ENCODE measurements at regions of chr19 and their contacts with region 1.

Region 1: DNA sequence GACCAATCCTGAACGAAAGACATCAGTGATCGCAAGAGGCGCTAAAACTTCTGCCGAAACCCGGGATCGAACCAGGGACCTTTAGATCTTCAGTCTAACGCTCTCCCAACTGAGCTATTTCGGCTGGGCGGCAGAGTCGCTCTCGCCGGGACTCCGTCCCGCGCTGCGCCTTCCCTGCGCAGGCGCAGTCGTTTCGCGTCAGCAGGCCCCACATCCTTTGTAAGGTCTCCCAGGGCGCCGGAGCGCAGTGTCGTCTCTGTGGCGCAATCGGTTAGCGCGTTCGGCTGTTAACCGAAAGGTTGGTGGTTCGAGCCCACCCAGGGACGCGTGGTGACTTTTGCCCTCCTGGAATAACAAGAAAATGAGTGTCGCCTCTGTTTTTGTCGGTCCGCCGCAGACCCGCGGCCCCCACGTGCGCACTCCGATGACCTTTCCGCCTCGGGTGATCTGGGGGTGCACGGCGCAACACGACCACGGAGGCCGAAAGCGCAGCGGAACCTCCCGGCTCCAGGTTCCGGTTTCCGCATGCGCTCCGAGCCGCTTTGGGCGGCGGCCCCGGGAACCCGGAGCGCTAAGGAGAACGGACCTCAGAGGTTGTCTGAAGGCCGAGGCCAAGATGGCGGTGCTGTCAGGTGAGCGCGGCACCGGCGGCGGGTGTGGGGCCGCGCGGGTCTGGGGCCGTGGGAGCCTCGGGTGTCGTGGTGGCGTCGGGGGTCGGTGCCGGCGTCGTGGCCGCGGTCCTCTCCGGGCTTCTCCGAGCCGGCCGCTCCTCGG is at the start of gene NDUFS7:
- DNase-seq: peak; percentile 89
- H3K4me3 Mint-ChIP-seq: peak within 1 kb of the TSS; percentile 87
- H3K27ac Mint-ChIP-seq: peak within 1 kb of the TSS; percentile 91
- H3K4me1 Mint-ChIP-seq: peaks cover 10% of the 10 kb centered on the region
- H3K27me3 Mint-ChIP-seq: no peaks in the 10 kb centered on the region
- total RNA-seq, gene NDUFS7: 88.7 and 104 TPM in 2 replicates

Region 2: DNA sequence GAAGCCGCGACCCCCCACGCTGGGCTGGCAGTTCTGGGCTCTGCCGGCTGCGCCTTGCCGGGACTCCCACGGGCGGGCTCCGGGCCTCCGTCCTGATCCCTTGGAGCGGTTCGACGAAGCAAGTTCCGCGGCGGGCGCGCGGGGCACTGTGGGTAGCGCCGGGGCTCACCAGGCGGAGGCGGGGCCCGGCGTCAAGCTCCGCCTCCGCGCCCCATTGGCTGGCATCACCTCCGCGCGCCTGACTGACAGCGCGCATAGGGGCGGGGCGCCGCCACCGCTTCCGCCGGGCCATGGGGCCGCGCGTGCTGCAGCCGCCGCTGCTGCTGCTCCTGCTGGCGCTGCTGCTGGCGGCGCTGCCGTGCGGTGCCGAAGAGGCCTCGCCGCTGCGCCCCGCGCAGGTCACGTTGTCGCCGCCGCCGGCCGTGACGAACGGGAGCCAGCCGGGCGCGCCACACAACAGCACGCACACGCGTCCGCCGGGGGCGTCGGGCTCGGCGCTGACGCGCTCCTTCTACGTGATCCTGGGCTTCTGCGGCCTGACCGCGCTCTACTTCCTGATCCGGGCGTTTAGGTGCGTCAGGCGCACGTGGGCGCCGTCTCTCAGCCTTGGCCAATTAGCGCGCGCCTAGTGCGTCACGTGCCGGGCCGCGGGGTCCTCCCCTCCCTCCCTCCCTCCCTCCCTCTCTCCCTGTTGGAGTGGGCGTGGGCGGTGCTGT is 108.1 kb before region 1 on chr19 and contains the start of gene FAM174C:
- intact Hi-C with region 1: loop called (anchors 5 kb)
- DNase-seq: peak; percentile 93
- H3K4me3 Mint-ChIP-seq: peak within 1 kb of the TSS; percentile 92
- H3K27ac Mint-ChIP-seq: peak within 1 kb of the TSS; percentile 96
- H3K4me1 Mint-ChIP-seq: peaks cover 37% of the 10 kb centered on the region
- H3K27me3 Mint-ChIP-seq: no peaks in the 10 kb centered on the region
- total RNA-seq, gene FAM174C: 91.7 and 99.4 TPM in 2 replicates

Region 3: GRCh38 chr19:1354977-1355567 is 28.4 kb before region 1 on chr19:
- intact Hi-C with region 1: loop called (anchors 1 kb)
- DNase-seq: no peak
- H3K4me3 Mint-ChIP-seq: peak overlapping the region; percentile 96
- H3K27ac Mint-ChIP-seq: no peak overlapping the region
- H3K4me1 Mint-ChIP-seq: peaks cover 9% of the 10 kb centered on the region
- H3K27me3 Mint-ChIP-seq: no peaks in the 10 kb centered on the region